ENCODE measurements at regions of chr2 and their contacts with region 1.

Region 1: DNA sequence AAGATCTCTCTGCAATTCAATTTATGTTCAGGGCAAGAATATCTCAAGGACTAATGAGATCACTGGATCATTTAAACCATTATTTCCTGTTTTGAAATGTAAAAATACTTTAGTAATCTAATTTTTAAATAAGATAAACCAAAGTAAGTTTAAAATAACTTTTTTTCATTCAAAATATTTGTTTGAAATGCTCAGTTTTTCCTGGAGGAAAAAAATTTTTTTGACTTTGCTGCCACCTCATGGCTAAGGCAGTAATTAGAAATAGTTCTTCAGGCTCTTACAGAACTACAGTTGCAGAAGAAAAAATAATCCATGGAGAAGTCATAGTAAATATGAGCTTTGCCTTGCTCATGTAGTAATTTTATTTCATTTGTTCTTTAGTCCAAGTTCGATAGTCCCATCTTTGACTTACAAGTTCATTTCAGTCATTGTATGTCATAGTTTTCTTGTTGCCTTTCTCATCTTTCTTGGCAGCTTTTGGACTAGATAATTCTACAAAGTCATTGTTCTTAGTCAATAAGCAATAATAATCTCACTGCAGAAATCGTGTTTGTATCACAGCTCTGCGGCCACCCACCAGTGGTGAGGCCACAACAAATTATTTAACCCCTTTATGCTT is 127.4 kb downstream of the DPP4 start:
- DNase-seq: peak; percentile 56
- H3K4me3 ChIP-seq: no peak overlapping the region
- H3K27ac ChIP-seq: no peak overlapping the region
- H3K4me1 ChIP-seq: no peaks in the 10 kb centered on the region
- H3K27me3 ChIP-seq: no peaks in the 10 kb centered on the region
- CTCF ChIP-seq: peak; percentile 72

Region 2: DNA sequence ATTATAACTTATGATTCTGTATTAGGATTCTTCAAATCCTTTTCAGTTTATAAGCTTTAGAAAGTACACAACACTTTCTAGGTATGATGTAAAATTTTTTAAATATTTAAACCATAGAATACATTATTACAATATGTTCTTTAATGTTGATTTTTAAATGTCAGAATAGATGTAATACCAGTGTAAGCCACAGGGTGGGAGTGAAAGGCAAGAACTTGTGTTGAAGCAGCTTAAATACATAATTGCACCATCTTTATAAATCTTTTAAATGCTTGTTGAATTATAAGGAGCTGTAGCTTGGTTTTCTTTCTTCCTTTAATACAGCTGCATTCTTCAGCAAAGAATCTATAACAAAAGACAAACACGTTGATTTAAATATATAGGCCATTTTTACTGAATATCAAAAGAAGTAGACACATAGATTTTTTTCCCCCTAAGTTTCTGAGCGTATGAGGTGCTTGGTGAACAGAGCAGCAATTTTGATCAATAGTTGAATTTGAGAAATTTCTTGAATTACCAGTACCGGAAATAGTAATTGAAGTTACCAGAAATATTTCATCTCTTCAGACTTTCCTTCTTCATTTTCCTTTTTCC is 723.4 kb before region 1 on chr2:
- CTCF ChIA-PET with region 1: no interaction called
- POLR2A ChIA-PET with region 1: no interaction called
- intact Hi-C with region 1: loop called (anchors 5 kb)
- DNase-seq: peak; percentile 63
- H3K4me3 ChIP-seq: no peak overlapping the region
- H3K27ac ChIP-seq: no peak overlapping the region
- H3K4me1 ChIP-seq: peaks cover 6% of the 10 kb centered on the region
- H3K27me3 ChIP-seq: no peaks in the 10 kb centered on the region
- CTCF ChIP-seq: peak; percentile 78

Region 3: GRCh38 chr2:161586517-161587167 is 360.0 kb before region 1 on chr2:
- CTCF ChIA-PET with region 1: no interaction called
- POLR2A ChIA-PET with region 1: no interaction called
- intact Hi-C with region 1: loop called (anchors 1 kb)
- DNase-seq: peak; percentile 56
- H3K4me3 ChIP-seq: no peak overlapping the region
- H3K27ac ChIP-seq: no peak overlapping the region
- H3K4me1 ChIP-seq: no peaks in the 10 kb centered on the region
- H3K27me3 ChIP-seq: no peaks in the 10 kb centered on the region
- CTCF ChIP-seq: peak; percentile 78

Region 4: DNA sequence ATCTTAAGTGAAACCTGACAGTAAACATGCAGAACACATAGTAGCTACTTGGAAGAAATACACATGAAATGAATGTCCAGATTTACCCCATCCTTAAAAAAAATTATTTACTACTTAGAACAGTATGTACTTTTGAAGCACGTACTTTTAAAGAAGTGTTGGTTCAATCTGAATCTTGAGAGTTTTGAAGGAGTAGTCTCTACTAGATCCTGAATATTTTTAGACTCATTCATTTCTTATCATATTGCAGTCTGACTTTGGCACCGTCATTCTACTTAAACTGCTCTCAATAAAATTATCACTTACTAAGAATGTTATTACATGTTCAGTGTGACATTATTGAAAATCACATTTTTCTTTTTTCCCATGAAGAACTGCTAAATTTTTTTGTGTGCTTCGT is 60.4 kb before region 1 on chr2:
- CTCF ChIA-PET with region 1: no interaction called
- POLR2A ChIA-PET with region 1: no interaction called
- intact Hi-C with region 1: no loop called
- DNase-seq: no peak
- H3K4me3 ChIP-seq: no peak overlapping the region
- H3K27ac ChIP-seq: no peak overlapping the region
- H3K4me1 ChIP-seq: no peaks in the 10 kb centered on the region
- H3K27me3 ChIP-seq: no peaks in the 10 kb centered on the region
- CTCF ChIP-seq: no peak

Measured in A673 (cell line).